ENCODE measurements at regions of chr1 and their contacts with region 1.

Region 1: DNA sequence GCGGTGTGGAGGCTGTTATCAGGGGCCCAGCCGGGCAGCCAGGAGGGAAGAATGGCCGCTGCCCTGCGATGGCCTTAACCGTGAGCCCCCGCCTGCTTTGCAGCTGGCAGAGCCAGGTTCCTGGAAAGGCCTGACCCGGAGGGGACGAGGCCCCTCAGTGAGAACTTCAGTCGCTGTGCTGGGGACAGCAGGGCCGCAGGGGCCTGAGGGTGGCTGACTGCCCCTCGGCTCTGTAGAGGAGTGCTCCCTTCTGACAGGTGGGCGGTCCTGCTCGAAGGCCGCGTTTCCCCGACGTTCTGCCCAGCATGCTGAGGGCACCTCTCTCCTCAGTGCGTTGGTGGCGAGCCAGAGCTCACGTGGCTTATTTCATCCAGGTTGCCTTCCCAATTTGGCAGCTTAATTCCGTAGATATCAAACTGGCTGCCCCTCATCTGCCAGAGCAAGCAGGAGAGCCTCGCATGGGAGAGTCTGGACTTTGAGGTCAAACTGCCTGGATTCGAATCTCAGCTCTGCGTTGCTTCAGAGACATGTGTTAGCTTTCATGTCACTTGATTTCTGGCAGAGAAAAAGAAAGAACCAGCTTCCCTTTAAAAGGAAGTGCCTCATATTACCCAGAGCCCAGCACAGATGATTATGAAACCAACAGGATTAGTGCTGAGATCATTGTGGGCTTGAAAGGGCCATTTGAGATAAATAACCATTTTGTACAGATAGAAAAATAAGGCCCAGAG is 239.8 kb downstream of the SDCCAG8 start:
- DNase-seq: peak; percentile 27
- H3K4me3 ChIP-seq: no peak overlapping the region
- H3K27ac ChIP-seq: peak overlapping the region; percentile 73
- H3K4me1 ChIP-seq: peaks cover 34% of the 10 kb centered on the region
- H3K27me3 ChIP-seq: no peaks in the 10 kb centered on the region
- CTCF ChIP-seq: no peak

Region 2: DNA sequence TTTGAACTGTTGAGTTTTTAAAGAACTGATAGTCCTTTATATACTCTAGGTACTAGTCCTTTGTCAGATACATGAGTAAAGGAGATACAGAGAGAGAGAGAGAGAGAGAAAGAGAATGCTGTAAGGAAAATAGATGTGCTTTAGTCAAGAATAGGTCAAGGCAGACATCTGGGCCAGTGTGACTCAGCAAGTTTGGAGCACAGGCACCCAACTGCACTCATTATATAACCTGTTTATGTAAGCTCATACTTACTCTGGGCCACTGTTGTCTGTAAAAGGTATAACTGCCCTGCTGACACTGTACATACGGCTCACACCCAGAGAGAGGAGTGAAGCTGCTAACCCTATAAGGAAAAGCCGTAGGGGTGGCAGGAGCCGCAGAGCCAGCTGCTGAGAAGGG is 386.7 kb after region 1 on chr1:
- CTCF ChIA-PET with region 1: no interaction called
- POLR2A ChIA-PET with region 1: interaction called, 25 read pairs
- intact Hi-C with region 1: no loop called
- DNase-seq: no peak
- H3K4me3 ChIP-seq: no peak overlapping the region
- H3K27ac ChIP-seq: no peak overlapping the region
- H3K4me1 ChIP-seq: no peaks in the 10 kb centered on the region
- H3K27me3 ChIP-seq: no peaks in the 10 kb centered on the region
- CTCF ChIP-seq: no peak

Measured in A673 (cell line).